ENCODE measurements at regions of chr17 and their contacts with region 1.

Region 1: DNA sequence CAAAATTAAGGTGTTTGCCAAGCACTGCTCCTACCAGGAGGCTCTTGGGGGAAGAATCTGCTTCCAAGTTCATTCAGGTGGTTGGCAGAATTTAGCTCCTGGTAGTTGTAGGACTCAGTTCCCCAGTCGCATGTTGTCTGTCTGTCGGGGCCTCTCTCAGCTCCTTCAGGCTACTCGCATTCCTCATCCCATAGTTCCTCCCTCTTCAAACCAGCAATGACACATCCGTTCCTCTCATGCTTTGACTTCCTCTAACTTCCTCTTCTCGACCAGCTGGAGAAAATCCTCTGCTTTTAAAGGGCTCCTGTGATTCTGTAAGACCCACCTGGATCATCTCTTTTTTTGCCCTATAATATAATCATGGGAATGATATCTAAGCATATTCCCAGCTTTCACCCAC is 108.1 kb downstream of the PMP22 start:
- H3K4me3 ChIP-seq: no peak overlapping the region
- H3K27ac ChIP-seq: no peak overlapping the region
- H3K4me1 ChIP-seq: no peaks in the 10 kb centered on the region
- CTCF ChIP-seq: no peak

Region 2: DNA sequence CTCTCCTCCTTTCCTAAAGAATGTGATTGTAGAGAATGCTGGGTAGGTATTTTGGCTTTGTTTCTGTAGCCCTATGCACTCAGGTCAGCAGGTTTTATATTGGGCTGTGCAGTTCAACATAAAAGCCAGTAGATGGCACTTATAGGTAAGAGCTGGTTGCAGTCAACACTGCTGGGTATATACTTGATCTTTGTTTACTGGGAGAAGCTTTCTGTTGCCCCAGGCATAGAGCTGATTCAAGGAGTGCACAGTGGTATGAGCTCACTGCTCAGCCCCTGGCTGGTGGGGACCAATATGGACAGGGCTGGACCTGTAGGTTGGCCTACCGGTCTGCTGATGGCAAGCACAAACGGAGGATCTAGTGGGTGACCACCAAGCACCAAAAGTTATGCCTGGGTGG is 270.8 kb before region 1 on chr17:
- CTCF ChIA-PET with region 1: interaction called, 17 read pairs
- POLR2A ChIA-PET with region 1: no interaction called
- H3K4me3 ChIP-seq: no peak overlapping the region
- H3K27ac ChIP-seq: no peak overlapping the region
- H3K4me1 ChIP-seq: no peaks in the 10 kb centered on the region
- CTCF ChIP-seq: no peak

Region 3: GRCh38 chr17:15171167-15172047 is 14.4 kb after region 1 on chr17:
- CTCF ChIA-PET with region 1: interaction called, 11 read pairs
- POLR2A ChIA-PET with region 1: no interaction called
- H3K4me3 ChIP-seq: no peak overlapping the region
- H3K27ac ChIP-seq: no peak overlapping the region
- H3K4me1 ChIP-seq: no peaks in the 10 kb centered on the region
- CTCF ChIP-seq: no peak